Activated CD4-positive, alpha-beta T cell treated with anti-CD3 and anti-CD28 coated beads for 36 hours (primary cell): ENCODE measurements at regions of chr3 and their contacts with region 1.

Region 1: GRCh38 chr3:114242947-114243346 is 5.6 kb upstream of the ZNF80 start:
- DNase-seq: peak; percentile 38
- ATAC-seq: peak; percentile 82
- H3K4me3 Mint-ChIP-seq: no peak overlapping the region
- H3K27ac Mint-ChIP-seq: no peak overlapping the region
- H3K4me1 Mint-ChIP-seq: peaks cover 22% of the 10 kb centered on the region
- H3K27me3 Mint-ChIP-seq: no peaks in the 10 kb centered on the region

Region 2: DNA sequence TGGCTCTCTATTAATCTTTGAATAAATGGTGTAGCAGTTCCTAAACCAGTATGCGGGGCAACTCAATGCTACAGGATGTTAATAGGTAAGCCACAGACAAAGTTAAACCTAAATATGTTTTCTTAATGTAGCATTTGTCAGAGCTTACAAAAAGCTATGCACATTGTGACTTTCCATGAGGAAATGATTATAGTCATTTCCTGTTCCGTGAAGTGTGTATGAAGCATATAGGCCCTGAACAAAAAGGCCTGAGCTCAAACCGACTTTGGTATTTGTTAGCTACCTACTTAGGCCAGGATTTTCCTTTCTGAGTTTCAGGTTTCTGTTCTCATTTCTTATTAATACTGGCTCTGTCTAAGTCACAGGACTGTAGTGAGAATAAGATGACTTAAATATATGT is 19.8 kb before region 1 on chr3:
- CTCF ChIA-PET with region 1: no interaction called
- POLR2A ChIA-PET with region 1: no interaction called
- intact Hi-C with region 1: loop called (anchors 1 to 2 kb)
- DNase-seq: no peak
- ATAC-seq: peak; percentile 74
- H3K4me3 Mint-ChIP-seq: no peak overlapping the region
- H3K27ac Mint-ChIP-seq: peak overlapping the region; percentile 89
- H3K4me1 Mint-ChIP-seq: peaks cover 78% of the 10 kb centered on the region
- H3K27me3 Mint-ChIP-seq: no peaks in the 10 kb centered on the region

Region 3: DNA sequence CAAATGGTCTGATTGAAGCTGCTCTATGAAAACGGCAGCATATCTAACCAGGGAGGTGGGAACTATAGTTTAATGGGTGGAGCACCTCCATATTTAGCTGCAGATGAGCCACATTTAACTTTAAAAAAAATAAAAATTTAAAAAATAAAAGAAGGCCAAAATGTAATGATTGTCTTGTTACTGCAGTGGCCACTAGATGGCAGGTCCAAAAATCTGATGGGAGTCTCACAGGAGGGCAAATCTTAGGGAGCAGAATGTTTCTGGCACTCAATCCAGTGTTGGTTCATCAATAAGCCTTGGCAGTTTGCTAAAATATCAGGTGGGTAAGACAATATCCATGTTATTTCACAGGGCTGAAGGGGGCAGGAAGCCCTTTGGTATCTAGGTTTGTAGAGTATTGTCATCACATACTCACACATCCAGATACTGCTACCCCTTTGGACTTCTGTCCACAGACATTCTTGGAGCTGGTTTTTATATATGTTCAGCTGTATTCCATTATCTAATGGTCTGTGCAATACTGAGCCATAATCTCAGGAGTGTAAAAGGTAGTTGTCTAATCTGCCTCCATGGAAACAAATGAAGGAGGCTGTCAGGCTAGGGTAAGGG is 284.2 kb after region 1 on chr3:
- CTCF ChIA-PET with region 1: no interaction called
- POLR2A ChIA-PET with region 1: no interaction called
- intact Hi-C with region 1: no loop called
- DNase-seq: peak; percentile 13
- ATAC-seq: no peak
- H3K4me3 Mint-ChIP-seq: no peak overlapping the region
- H3K27ac Mint-ChIP-seq: no peak overlapping the region
- H3K4me1 Mint-ChIP-seq: no peaks in the 10 kb centered on the region
- H3K27me3 Mint-ChIP-seq: no peaks in the 10 kb centered on the region